A673 (cell line): ENCODE measurements at regions of chr22 and their contacts with region 1.

Region 1: GRCh38 chr22:35454416-35455054 is 54.6 kb downstream of the MCM5 start:
- DNase-seq: peak; percentile 65
- H3K4me3 ChIP-seq: no peak overlapping the region
- H3K27ac ChIP-seq: no peak overlapping the region
- H3K4me1 ChIP-seq: peaks cover 19% of the 10 kb centered on the region
- H3K27me3 ChIP-seq: no peaks in the 10 kb centered on the region
- CTCF ChIP-seq: peak; percentile 45

Region 2: GRCh38 chr22:35350539-35351503 is 103.7 kb before region 1 on chr22:
- CTCF ChIA-PET with region 1: no interaction called
- POLR2A ChIA-PET with region 1: no interaction called
- intact Hi-C with region 1: loop called (anchors 5 kb)
- DNase-seq: peak; percentile 91
- H3K4me3 ChIP-seq: peak overlapping the region; percentile 55
- H3K27ac ChIP-seq: peak overlapping the region; percentile 27
- H3K4me1 ChIP-seq: peaks cover 13% of the 10 kb centered on the region
- H3K27me3 ChIP-seq: no peaks in the 10 kb centered on the region
- CTCF ChIP-seq: peak; percentile 90

Region 3: DNA sequence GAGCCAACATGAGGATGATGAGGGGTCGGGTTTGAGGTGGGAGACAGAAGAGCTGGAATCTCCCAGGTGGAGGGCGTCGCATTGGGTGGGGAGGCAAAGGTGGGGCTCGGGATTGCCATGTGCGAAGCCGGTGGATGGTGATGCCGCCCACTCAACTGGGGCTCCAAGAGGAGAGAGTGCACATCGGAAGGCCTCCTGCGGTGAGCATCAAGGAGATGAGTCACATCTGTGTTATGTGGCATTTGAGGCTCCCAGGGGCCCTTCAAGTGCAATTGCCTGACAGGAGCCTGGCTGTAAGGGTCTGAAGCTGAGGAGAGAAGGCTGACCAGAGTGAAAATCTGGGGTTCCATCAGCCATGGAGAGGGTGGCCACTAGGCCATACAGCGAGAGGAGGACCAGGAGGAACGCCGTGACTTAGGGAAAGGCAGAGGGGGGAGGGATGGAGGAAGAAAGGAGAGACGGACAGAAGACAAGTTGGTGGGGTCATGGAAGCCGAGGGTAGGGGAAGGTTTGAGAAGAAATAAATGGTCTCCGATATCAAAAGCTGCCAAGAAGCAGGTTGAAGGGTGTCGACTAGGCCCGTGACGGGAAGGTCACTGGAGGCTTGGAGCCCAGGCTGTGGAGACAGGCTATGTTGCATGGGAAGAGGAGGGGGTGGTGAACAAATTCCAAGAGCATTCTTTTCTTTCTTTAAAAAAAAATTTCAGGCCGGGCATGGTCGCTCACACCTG is 107.4 kb after region 1 on chr22:
- CTCF ChIA-PET with region 1: no interaction called
- POLR2A ChIA-PET with region 1: no interaction called
- intact Hi-C with region 1: loop called (anchors 5 kb)
- DNase-seq: peak; percentile 96
- H3K4me3 ChIP-seq: no peak overlapping the region
- H3K27ac ChIP-seq: peak overlapping the region; percentile 66
- H3K4me1 ChIP-seq: peaks cover 41% of the 10 kb centered on the region
- H3K27me3 ChIP-seq: no peaks in the 10 kb centered on the region
- CTCF ChIP-seq: no peak

Region 4: DNA sequence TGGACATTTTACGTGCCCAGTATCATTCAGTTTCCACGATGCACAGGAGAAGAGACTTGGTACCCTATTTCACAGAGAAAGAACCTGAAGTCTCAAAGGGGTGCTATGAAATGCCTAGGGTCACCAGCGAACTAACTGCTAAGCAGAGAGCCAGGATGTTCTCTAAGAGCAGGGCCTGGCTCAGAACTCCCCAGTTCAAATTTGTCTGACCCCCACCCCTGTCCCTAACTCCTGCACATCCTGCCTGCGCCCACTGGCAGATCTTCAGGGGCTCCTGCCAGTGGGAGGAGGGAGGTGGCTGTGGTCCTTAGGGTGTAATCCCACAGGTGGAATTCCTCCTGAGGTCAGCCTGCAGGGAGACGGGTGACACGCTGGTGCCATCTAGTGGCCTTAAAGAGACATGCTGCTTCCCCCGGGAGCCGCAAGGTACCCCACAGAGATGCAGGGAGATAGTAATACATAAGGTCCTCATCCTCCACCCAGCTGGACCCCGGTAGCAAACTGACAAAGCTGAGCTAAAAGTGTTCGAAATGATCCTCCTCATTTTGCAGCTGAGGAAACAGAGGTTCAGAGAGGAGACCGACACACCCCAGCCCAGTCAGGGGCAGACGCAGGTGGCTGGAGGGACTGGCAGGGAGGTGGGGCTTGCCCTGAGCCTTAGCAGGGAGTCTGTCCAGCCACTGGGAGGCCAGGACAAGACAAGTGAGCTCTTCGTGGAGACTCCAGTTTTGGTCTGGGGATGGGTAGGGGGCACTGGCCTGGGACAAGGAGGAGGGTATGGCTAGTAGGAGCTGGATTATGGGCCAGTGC is 128.5 kb after region 1 on chr22:
- CTCF ChIA-PET with region 1: no interaction called
- POLR2A ChIA-PET with region 1: no interaction called
- intact Hi-C with region 1: loop called (anchors 1 kb)
- DNase-seq: peak; percentile 72
- H3K4me3 ChIP-seq: no peak overlapping the region
- H3K27ac ChIP-seq: no peak overlapping the region
- H3K4me1 ChIP-seq: no peaks in the 10 kb centered on the region
- H3K27me3 ChIP-seq: no peaks in the 10 kb centered on the region
- CTCF ChIP-seq: peak; percentile 93